Activated CD4-positive, alpha-beta T cell treated with anti-CD3 and anti-CD28 coated beads, Interleukin-2, amount 10 ng/mL, durations not matched to agents 24 days and 14 days (primary cell): ENCODE measurements at regions of chr1 and their contacts with region 1.

Region 1: DNA sequence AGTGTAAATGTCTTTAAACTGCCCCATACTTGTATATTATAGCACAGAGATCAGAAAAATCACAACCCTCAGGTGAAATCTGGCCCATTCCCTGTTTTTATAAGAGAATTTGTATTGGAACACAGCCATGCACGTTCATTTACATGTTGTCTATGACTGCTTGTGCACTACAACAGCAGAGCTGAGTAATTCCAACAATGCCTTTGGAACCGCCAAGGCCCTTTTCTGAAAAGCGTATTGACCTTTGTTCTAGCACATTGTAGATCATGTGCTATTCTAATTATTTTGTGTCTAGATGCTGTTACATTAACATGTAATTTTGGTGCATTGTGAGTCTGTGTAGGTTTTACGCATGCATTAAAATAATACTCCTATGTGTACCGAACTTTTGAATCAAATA is 339.6 kb downstream of the CHRM3 start:
- DNase-seq: no peak
- H3K4me3 Mint-ChIP-seq: no peak overlapping the region
- H3K27ac Mint-ChIP-seq: no peak overlapping the region
- H3K4me1 Mint-ChIP-seq: peaks cover 18% of the 10 kb centered on the region
- H3K27me3 Mint-ChIP-seq: no peaks in the 10 kb centered on the region

Region 2: DNA sequence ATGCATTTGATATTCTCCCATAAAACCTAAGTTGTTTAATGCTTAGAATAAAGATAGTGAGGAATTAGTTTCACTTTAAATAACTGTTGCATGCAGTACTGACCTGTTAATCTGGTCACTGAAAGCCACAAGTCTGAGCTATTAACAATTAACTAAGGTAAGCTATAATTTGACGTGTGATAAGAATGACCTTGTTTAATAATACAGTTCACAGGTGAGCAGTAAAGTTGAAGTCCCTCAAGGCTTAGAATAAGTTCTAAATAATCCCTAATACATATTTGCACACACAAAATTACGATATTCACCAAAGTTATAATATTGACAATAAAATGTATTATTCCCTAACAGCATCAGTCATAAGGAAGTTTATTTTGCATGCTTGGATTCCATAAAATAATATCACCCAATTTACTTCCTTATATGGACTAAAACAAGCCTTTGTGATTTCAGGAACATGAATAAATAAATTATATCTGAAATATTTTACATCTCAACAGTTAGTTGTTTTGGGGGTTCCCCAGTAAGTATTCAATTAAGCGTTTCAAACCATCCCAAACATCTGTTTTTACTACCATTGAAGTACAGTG is 410.2 kb before region 1 on chr1:
- intact Hi-C with region 1: no loop called
- DNase-seq: no peak
- H3K4me3 Mint-ChIP-seq: no peak overlapping the region
- H3K27ac Mint-ChIP-seq: no peak overlapping the region
- H3K4me1 Mint-ChIP-seq: no peaks in the 10 kb centered on the region
- H3K27me3 Mint-ChIP-seq: no peaks in the 10 kb centered on the region

Region 3: GRCh38 chr1:239696317-239696716 is 29.6 kb before region 1 on chr1:
- intact Hi-C with region 1: loop called (anchors 5 kb)
- DNase-seq: no peak
- H3K4me3 Mint-ChIP-seq: no peak overlapping the region
- H3K27ac Mint-ChIP-seq: no peak overlapping the region
- H3K4me1 Mint-ChIP-seq: no peaks in the 10 kb centered on the region
- H3K27me3 Mint-ChIP-seq: no peaks in the 10 kb centered on the region